Naive thymus-derived CD4-positive, alpha-beta T cell (primary cell): ENCODE measurements at regions of chr17 and their contacts with region 1.

Region 1: DNA sequence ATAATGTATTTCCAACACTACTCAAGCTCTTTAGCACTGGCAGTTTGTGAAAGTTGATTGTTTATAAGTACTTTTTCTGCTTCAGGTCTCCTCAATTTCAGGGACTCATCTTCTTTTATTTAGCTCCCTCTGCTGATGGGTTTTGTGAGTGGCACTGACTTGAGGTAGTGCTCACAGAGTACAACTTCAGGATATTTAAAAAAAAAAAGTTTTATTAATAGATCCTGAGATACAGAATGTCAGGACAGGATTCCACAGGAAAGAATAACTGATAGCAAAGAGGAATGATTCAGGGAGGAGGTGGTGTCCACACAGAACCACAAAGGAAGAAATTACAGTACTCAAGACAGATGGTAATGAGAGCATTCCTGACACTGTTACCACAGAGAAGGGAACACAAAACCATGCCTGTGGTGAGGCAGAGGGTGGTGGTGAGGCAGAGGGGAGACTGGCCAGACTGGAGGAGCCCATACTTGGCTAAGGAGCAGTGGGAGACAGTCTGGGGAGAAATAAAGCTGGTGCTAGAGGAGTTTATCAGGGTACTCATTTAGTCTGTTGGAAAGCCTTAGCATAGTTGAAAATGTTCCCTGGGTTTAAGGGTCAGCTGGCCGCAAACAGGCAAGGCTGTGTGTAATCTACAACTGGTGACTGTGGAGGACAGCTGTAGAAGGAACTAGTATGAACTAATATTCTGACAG is 63.7 kb downstream of the SPAG9 start:
- DNase-seq: peak in 7 of 9 donors; percentile 23 to 55 (median 44)
- ATAC-seq: peak; percentile 75
- H3K4me3 ChIP-seq: no peak overlapping the region
- H3K4me3 Mint-ChIP-seq: no peak overlapping the region
- H3K27ac ChIP-seq: no peak overlapping the region
- H3K27ac Mint-ChIP-seq: peak overlapping the region in 1 of 9 donors; percentile 84
- H3K4me1 ChIP-seq: no peaks in the 10 kb centered on the region
- H3K4me1 Mint-ChIP-seq: peaks cover 4 to 16% (median 12%) of the 10 kb centered on the region in 7 donors
- H3K27me3 ChIP-seq: no peaks in the 10 kb centered on the region
- H3K27me3 Mint-ChIP-seq: no peaks in the 10 kb centered on the region

Region 2: DNA sequence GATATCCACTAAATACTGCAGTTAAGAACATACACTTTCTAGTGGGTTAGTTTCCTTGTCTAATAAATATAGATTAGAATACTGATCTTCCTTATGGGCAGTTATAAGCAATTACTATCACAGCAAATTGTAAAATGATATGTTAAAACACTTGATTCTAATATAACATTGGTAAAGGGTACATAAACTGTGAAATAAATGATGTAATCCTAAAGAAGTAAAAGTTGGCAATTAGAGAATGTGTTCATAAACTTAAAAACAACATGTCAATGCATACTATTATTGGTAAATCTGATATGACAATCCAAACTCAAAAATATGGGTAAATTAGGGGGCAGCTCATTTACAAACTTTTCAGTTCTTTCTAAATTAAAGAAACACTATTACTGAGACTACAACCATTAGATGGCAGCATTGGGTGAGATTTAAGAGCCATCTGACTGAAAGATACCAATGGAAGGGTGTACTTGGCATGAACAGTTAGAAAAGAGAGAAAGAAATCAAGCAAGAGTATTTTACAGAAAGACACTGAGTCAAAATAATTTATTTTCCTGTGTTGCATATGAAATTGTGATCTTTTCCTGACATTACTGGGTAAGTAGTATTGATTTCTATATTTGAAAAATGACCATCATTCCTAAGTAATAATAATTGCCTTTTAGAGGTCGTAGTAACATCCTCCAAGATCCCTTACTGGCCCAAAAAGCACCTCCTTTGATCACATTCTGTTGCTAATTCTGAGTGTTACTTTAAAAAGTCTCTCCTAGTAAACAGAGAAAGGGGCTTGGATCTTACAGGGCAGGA is 55.9 kb before region 1 on chr17:
- CTCF ChIA-PET with region 1: interaction called, 3 read pairs
- POLR2A ChIA-PET with region 1: no interaction called
- intact Hi-C with region 1: loop called (anchors 1 kb)
- DNase-seq: peak in 7 of 9 donors; percentile 55 to 74 (median 65)
- ATAC-seq: peak; percentile 82
- H3K4me3 ChIP-seq: no peak overlapping the region
- H3K4me3 Mint-ChIP-seq: no peak overlapping the region
- H3K27ac ChIP-seq: no peak overlapping the region
- H3K27ac Mint-ChIP-seq: peak overlapping the region in 3 of 9 donors; percentile 11 to 60 (median 30)
- H3K4me1 ChIP-seq: no peaks in the 10 kb centered on the region
- H3K4me1 Mint-ChIP-seq: peaks cover 0 to 6% (median 5%) of the 10 kb centered on the region in 7 donors
- H3K27me3 ChIP-seq: no peaks in the 10 kb centered on the region
- H3K27me3 Mint-ChIP-seq: no peaks in the 10 kb centered on the region

Region 3: DNA sequence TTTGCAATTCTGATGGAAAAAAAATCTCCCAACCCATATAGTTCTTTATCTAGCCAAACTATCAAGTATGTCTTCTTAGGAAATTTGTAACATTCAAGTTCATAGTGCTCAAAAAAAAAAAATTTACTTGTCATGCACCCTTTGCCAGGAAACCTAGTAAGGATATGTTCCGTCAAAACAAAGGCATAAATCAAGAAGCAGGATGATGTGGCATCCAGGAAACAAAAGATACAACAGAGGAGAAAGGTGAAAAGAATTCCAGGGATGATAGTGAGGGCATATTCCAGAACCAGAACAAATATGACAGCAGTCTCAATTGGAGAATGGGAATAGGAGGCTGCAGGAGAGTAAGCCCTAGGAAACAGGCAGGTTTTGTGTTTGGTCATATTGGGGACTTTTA is 40.9 kb before region 1 on chr17:
- CTCF ChIA-PET with region 1: no interaction called
- POLR2A ChIA-PET with region 1: no interaction called
- intact Hi-C with region 1: no loop called
- DNase-seq: no peak
- ATAC-seq: no peak
- H3K4me3 ChIP-seq: no peak overlapping the region
- H3K4me3 Mint-ChIP-seq: no peak overlapping the region
- H3K27ac ChIP-seq: no peak overlapping the region
- H3K27ac Mint-ChIP-seq: no peak overlapping the region
- H3K4me1 ChIP-seq: no peaks in the 10 kb centered on the region
- H3K4me1 Mint-ChIP-seq: peaks cover 0 to 2% (median 0%) of the 10 kb centered on the region in 7 donors
- H3K27me3 ChIP-seq: no peaks in the 10 kb centered on the region
- H3K27me3 Mint-ChIP-seq: no peaks in the 10 kb centered on the region

Region 4: DNA sequence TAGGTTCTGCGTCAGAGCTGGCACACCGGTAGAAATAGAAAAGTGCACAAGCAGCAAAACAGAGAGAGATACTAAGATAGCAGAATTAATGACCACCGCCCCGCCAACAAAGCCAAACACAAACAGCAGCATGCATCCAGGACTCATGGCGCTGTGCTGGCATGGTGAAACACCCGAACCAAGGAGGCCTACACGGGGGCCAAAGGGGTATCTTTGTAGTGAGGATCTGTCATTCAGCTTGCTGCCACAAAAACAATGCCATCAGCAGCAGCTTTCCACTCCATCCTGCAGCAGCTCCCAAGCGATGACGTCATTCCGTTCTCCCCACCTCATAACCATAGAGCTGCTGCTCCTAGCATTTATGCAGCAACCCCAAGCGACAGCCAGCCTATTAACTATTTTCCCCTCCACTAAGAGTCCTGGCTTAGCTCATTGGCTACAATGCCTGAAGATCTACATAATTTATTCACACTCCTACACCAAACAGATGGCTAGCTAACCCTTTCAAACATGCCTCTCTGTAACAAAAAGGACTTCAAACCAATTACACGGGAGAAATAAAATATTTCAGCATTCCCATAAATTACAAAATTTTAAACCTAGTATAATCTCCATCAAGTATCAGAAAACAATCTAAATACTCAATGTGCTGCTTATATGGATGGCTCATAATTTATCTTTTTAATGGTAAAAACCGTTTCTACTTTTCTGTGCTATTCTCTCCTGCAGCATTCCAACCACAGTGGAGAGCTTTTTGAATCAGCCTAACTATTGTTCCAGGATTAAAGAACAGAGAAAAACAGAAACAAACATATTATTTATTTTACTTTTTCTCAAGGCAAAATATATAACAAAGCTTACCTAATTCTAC is 10.2 kb before region 1 on chr17:
- CTCF ChIA-PET with region 1: interaction called, 5 read pairs
- POLR2A ChIA-PET with region 1: no interaction called
- intact Hi-C with region 1: loop called in 1 of 2 experiments (anchors 1 kb)
- DNase-seq: no peak
- ATAC-seq: no peak
- H3K4me3 ChIP-seq: no peak overlapping the region
- H3K4me3 Mint-ChIP-seq: no peak overlapping the region
- H3K27ac ChIP-seq: no peak overlapping the region
- H3K27ac Mint-ChIP-seq: no peak overlapping the region
- H3K4me1 ChIP-seq: peaks cover 0 to 5% of the 10 kb centered on the region in 2 donors
- H3K4me1 Mint-ChIP-seq: peaks cover 0 to 7% (median 0%) of the 10 kb centered on the region in 7 donors
- H3K27me3 ChIP-seq: no peaks in the 10 kb centered on the region
- H3K27me3 Mint-ChIP-seq: no peaks in the 10 kb centered on the region